ENCODE measurements at regions of chr2 and their contacts with region 1.

Region 1: GRCh38 chr2:64750817-64751285 is 97.1 kb upstream of the SERTAD2 start:
- DNase-seq: peak; percentile 99
- H3K4me3 Mint-ChIP-seq: peak overlapping the region; percentile 98
- H3K27ac Mint-ChIP-seq: peak overlapping the region; percentile 99
- H3K4me1 Mint-ChIP-seq: peaks cover 22% of the 10 kb centered on the region
- H3K27me3 Mint-ChIP-seq: no peaks in the 10 kb centered on the region

Region 2: DNA sequence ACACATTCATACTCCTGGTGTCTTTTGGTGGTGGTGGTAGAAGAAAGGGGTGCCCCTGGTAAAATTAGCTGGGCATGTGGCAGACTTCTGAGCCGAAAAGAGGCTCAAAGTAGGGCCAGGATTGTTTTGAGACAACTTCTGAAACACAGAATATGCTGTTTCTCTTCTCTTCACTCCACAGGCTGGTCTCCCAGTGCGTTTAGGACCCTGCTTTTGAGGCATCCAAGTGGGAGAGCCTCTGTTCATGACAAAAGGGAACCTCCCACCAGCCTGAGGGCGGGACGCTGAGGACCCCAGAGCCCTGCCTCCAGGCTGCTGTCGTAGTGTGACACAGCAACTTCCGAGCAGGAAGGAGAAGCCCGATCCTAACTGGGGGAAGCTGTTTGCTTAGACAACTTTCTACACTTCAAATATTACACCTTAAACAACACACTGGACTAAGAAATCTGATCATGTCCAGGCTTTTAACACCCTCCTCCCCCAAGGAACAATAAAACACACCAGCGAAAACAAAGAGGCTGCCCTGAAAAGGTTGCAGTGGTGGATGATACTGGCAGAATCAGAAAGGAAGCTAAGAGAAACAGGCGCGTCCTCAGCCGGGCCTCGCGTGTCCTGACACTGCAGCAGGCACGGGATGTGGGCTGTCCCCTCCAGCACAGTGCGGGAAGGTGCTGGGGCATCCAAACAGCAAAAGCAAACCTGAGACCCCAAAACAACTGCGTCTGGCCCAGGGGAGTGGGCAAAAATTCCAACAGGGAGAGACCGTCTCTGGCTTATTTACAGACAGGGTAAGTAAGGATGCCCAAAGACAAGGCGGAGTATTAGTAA is 106.5 kb before region 1 on chr2:
- intact Hi-C with region 1: loop called (anchors 1 kb)
- DNase-seq: peak; percentile 88
- H3K4me3 Mint-ChIP-seq: peak overlapping the region; percentile 84
- H3K27ac Mint-ChIP-seq: peak overlapping the region; percentile 92
- H3K4me1 Mint-ChIP-seq: peaks cover 77% of the 10 kb centered on the region
- H3K27me3 Mint-ChIP-seq: no peaks in the 10 kb centered on the region

Region 3: DNA sequence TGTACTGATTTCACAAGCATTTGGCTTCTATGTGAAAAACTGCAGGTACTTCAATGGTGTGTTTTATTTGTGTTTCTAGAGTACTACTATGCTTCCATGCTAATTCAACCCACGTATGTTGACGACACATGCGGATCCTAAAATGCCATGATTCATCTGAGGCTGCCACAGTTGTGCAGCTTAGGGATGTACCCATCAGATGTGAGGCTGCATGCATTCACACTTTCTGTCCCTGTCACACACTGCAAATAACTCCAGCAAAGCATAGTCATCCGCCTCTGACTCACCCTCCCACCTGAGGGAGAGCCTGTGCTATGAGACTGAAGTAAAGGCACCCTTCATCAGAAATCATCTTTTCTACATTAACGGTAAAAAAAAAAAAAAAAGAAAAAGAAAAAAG is 75.0 kb before region 1 on chr2:
- intact Hi-C with region 1: loop called (anchors 2 kb)
- DNase-seq: peak; percentile 79
- H3K4me3 Mint-ChIP-seq: no peak overlapping the region
- H3K27ac Mint-ChIP-seq: peak overlapping the region; percentile 71
- H3K4me1 Mint-ChIP-seq: peaks cover 45% of the 10 kb centered on the region
- H3K27me3 Mint-ChIP-seq: no peaks in the 10 kb centered on the region

Region 4: GRCh38 chr2:64730551-64731262 is 20.1 kb before region 1 on chr2:
- intact Hi-C with region 1: loop called (anchors 1 kb)
- DNase-seq: peak; percentile 85
- H3K4me3 Mint-ChIP-seq: peak overlapping the region; percentile 84
- H3K27ac Mint-ChIP-seq: peak overlapping the region; percentile 95
- H3K4me1 Mint-ChIP-seq: peaks cover 55% of the 10 kb centered on the region
- H3K27me3 Mint-ChIP-seq: no peaks in the 10 kb centered on the region

Region 5: DNA sequence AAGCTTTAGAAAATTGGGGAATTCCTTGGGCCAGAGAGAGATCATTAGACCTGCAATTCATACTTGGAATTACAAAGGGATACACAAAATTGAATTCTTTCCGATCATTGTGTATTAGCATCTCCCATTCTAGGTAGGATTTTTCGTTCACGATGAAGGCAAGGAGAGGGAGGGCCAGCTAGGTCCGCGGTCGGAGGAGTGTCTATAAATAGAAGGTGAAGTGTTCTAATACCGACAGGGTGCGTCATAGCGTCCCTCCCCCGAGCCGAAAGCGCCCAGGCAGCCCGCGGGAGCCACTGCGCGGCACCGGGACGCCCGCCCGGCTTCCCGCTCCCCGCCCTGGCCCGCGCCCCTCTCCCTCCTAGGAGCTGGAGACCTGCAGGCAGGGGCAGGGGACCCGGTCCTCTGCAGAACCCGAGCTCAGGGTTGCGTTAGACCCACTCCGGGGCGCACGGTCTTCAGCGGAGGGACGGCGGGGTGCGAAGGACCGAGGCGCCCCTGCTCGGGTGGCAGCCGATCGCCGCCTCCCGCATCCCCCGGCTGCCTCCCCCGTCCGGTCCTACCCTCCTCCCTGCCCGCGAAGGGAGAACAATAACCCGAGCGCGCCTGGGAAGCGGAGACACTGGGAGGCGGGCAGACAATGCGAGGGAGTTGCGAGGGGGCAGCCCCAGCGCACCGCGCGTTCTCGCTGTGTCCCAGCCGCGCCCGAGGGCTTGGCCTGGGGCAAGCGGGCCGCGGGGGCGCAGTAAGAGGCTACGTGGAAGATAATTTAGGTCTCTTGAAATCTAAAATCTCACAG is 17.0 kb after region 1 on chr2:
- intact Hi-C with region 1: loop called (anchors 1 kb)
- DNase-seq: peak; percentile 93
- H3K4me3 Mint-ChIP-seq: peak overlapping the region; percentile 92
- H3K27ac Mint-ChIP-seq: peak overlapping the region; percentile 97
- H3K4me1 Mint-ChIP-seq: peaks cover 40% of the 10 kb centered on the region
- H3K27me3 Mint-ChIP-seq: peaks cover 2% of the 10 kb centered on the region

Region 6: DNA sequence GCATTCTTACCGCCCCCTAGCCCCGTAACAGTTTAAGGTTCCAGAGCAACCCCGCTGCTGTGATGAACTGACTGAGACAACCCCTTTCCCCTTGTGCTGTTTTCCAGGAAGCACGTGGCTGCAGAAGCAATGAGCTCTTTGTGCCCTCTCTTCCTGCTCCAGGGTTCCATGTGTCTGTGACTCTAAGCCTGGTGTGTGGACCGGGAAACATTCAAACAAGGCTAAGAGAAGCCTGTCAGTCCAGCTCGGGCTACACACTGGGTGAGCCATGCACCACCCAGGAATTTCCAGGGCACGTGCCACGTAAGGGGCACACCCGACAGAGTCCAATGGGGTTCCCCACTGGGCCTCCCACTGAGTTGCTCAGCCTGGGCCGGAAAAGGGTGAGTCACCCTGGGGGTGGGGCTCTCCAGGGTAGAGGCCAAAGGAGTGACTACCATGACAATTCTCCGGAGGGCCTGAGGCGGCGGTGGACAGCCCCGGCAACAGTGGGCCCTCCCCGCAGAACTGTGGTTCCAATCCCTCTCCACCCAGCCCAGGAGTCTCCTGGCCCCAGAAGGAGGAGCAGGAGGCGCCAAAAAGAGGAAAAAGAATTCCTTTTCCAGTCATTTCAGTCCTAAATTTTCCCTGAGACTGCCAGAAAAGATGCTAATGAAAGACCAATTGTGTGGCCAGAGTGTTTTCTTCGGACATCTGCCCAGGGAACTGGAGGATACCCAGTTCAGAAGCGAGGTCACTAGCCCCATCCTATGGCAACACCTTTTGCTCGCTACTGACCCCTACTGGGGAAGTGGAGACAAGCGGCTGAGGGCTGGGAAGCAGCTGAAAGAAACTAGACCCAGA is 80.5 kb after region 1 on chr2:
- intact Hi-C with region 1: loop called (anchors 1 kb)
- DNase-seq: peak; percentile 95
- H3K4me3 Mint-ChIP-seq: peak overlapping the region; percentile 57
- H3K27ac Mint-ChIP-seq: peak overlapping the region; percentile 85
- H3K4me1 Mint-ChIP-seq: peaks cover 28% of the 10 kb centered on the region
- H3K27me3 Mint-ChIP-seq: peaks cover 8% of the 10 kb centered on the region

Measured in activated CD4-positive, alpha-beta T cell treated with anti-CD3 and anti-CD28 coated beads, Interleukin-2, amount 10 ng/mL, durations not matched to agents 24 days and 14 days (primary cell).